ENCODE measurements at regions of chr10 and their contacts with region 1.

Region 1: GRCh38 chr10:99435986-99436638 is 5.7 kb upstream of the GOT1 start:
- DNase-seq: no peak
- H3K4me3 ChIP-seq: no peak overlapping the region
- CTCF ChIP-seq: peak; percentile 34

Region 2: GRCh38 chr10:99394761-99395386 is 41.2 kb before region 1 on chr10:
- CTCF ChIA-PET with region 1: interaction called, 36 read pairs
- POLR2A ChIA-PET with region 1: no interaction called
- DNase-seq: no peak
- H3K4me3 ChIP-seq: no peak overlapping the region
- CTCF ChIP-seq: no peak

Region 3: GRCh38 chr10:99410146-99410545 is 26.0 kb before region 1 on chr10:
- CTCF ChIA-PET with region 1: interaction called, 10 read pairs
- POLR2A ChIA-PET with region 1: no interaction called
- DNase-seq: no peak
- H3K4me3 ChIP-seq: no peak overlapping the region
- CTCF ChIP-seq: no peak

Region 4: DNA sequence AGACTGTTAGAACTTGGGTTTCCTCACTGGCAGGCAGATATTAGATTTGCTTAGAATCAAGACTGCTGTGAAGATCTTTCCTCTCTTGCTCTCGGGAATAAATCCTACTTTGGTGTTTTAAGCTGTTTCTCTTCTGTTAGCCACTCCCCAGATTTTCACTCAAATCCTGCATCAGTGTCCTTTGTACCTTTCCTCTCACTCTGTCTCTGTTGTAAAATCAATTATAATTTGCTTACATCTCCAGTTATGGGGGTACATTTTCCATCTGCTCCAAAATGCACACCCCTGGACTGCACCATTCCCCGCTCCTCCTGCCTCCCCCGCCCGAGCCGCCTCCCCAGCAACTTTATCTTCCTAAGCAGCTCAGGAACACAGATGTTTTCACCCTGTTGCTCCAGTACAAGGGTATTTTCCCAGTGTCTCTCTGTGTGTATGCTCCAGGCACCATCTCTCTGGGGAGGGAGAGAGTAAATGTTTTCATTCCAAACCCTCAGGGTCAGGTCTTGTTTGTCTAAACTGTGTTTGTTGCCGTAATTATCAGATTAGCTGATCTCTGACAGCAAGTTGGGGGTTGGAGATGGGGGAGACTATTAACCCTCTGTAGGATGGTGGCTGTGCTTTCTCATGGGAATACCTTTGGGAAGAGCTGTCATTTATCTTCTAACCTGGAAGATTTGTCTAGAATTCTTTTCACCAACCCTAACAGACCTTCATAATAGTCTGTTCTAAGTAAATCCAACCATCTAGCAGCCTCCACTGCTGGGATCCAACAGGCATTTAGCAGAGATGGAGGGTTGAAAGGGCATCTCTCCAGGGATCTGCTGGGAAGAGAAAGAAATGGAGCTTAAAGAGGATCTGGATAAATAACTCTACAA is 14.7 kb after region 1 on chr10:
- CTCF ChIA-PET with region 1: interaction called, 37 read pairs
- POLR2A ChIA-PET with region 1: no interaction called
- DNase-seq: no peak
- H3K4me3 ChIP-seq: no peak overlapping the region
- CTCF ChIP-seq: no peak

Region 5: GRCh38 chr10:99548041-99548530 is 112.0 kb after region 1 on chr10:
- CTCF ChIA-PET with region 1: interaction called, 42 read pairs
- POLR2A ChIA-PET with region 1: no interaction called
- DNase-seq: no peak
- H3K4me3 ChIP-seq: no peak overlapping the region
- CTCF ChIP-seq: peak; percentile 47

Region 6: GRCh38 chr10:99612167-99612831 is 176.2 kb after region 1 on chr10:
- CTCF ChIA-PET with region 1: interaction called, 245 read pairs
- POLR2A ChIA-PET with region 1: no interaction called
- DNase-seq: no peak
- H3K4me3 ChIP-seq: no peak overlapping the region
- CTCF ChIP-seq: peak; percentile 76

Region 7: DNA sequence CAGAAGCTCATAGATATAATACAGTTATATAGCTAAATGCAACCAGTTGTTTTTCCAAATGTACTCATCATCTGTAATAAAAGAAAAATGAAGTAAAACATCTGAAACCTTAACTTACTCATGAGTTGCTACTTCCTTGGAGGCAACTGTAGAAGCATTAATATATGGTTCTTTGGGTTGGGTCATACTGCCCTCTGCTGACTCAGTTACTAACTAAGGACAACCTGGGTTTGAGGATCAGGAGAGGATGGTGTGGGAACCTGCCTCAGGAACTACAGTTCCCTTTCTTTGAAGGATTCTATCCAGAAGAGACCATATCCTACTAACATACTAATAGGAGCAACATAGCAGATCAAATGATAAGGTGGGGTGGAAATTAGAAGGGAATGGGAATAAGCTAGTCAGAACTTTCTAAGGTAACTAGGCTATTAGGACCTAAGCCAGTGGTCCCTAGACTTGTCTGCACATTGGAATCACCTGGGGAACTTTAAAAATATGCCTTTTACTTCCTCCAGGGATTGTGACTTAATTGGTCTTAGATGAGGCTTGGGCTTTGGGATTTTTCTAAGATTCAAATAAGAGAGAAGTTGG is 275.1 kb after region 1 on chr10:
- CTCF ChIA-PET with region 1: interaction called, 22 read pairs
- POLR2A ChIA-PET with region 1: no interaction called
- DNase-seq: no peak
- H3K4me3 ChIP-seq: no peak overlapping the region
- CTCF ChIP-seq: peak; percentile 50

Measured in AG04449 (cell line).